ENCODE measurements at regions of chr16 and their contacts with region 1.

Region 1: DNA sequence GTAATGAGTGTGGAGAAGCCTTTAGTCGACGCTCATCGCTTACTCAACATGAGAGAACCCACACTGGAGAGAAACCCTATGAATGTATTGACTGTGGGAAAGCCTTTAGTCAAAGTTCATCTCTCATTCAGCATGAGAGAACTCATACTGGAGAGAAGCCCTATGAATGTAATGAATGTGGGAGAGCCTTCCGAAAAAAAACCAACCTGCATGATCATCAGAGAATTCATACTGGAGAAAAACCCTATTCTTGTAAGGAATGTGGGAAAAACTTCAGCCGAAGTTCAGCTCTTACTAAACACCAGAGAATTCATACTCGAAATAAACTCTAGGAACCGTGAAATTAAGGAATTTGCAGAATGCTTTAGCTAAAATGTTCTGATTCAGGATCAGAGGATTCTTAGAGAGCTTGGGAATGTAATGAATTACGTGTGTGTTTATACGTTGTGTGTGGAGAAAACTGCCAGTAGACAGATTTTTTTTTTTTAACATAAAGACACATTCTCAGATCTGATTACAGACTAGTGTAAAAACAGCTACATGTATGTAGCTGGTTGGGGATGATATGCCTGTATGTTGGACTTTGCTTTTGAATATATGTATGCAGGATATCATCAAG is 25.4 kb downstream of the ZFP90 start:
- DNase-seq: no peak
- H3K4me3 ChIP-seq: no peak overlapping the region
- H3K27ac ChIP-seq: no peak overlapping the region
- H3K4me1 ChIP-seq: no peaks in the 10 kb centered on the region
- H3K27me3 ChIP-seq: no peaks in the 10 kb centered on the region
- CTCF ChIP-seq: no peak
- EP300 ChIP-seq: no peak
- POLR2A ChIP-seq: no peak

Region 2: DNA sequence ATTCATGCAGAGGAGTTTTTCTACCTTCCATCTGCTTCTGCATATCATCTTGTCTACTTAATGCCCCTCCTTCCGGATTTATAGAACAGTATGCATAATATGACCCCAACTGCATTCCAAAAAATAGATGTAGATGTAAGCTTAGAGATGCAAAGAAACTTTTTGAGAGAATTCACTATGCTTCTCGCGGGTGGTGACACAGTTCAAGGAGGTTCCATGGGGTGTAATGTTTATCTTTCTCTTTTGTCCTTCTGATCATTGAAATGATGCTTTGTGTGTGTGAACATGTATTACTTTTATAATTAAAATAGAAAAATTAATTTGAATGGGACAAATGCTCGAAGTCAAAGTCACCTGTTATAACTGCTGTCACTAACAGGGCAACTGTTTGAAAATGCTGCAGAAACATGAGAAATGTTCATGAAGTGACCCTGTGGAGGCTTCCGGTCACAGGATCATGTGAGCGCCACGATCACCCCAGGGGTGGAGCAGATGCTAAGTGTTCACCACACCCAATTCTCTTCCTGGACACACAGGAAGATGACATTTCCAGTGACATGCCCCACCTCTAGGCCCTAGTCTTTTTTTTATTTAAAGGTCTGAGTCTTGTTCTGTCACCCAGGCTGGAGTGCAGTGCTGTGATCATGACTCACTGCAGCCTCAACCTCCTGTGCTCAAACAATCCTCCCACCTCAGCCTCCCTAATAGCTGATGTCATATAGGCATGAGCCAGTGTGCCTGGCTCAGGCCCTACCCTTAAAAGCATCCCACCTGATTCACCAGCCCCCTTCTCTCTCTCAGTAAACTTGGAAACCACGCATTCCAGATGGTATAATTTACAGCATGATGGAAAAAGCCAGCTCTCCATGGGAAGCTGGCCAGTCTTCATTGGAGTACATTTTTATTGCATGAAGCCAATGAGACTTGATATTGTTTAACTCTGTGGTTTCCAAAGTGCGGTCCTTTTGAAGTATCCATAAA is 1060.1 kb before region 1 on chr16:
- in situ Hi-C with region 1: no loop called
- intact Hi-C with region 1: loop called (anchors 5 kb)
- DNase-seq: peak; percentile 68
- H3K4me3 ChIP-seq: no peak overlapping the region
- H3K27ac ChIP-seq: peak overlapping the region; percentile 13 to 67 (median 54)
- H3K4me1 ChIP-seq: peaks cover 0 to 16% (median 8%) of the 10 kb centered on the region in 4 donors
- H3K27me3 ChIP-seq: no peaks in the 10 kb centered on the region
- CTCF ChIP-seq: no peak
- EP300 ChIP-seq: peak; percentile 28
- POLR2A ChIP-seq: no peak

Region 3: DNA sequence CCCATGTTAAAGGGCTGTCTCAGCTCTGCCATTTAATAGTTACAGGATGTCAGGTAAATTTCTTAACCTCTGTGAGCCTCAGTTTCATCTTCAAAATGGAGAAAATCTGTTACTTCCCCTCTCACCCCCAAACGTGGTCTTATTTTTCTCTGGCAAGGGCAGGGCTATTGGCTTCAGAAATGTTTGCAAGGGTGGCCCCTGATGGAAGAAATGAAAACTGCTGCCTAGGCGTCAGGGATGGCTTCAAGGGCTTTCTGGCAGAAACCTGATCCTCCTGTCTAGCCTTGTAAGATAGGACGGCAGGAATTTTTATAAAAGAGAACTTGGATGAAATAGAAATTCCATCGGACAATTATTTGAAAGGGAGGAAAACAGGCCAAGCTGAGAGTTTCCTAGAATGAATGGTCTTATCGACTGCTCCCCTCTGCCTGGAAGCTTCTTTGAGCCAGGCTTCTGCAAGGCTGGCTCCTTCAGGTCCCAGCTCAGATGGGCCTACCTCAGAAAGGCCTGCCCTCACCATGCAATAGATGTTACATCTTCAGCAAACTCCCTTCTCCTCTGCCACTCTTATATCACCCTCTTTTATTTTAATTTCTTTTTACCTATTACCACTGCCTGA is 235.9 kb after region 1 on chr16:
- in situ Hi-C with region 1: loop called in 1 of 4 experiments (anchors 25 kb)
- intact Hi-C with region 1: no loop called
- DNase-seq: peak; percentile 65
- H3K4me3 ChIP-seq: no peak overlapping the region
- H3K27ac ChIP-seq: no peak overlapping the region
- H3K4me1 ChIP-seq: peaks cover 0 to 11% (median 0%) of the 10 kb centered on the region in 4 donors
- H3K27me3 ChIP-seq: no peaks in the 10 kb centered on the region
- CTCF ChIP-seq: peak; percentile 64 to 79 (median 65)
- EP300 ChIP-seq: no peak
- POLR2A ChIP-seq: no peak

Region 4: DNA sequence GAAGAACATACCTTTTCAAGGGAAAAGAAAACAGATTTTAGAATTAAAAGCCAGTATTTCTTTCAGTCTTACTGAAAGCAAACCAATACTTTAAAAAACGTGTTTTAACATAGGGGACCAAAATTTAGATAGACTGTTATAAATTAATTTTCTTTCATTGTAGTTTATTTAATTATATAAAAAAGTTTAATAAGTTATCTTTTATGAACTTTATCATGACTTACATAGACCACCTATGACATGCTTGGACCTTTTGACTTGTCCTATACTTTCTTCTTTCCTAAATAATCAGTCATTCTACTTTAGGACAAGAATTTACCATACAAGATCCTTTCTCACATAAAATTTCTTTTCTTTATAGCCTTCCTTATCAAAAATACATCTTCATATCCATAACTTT is 439.0 kb after region 1 on chr16:
- in situ Hi-C with region 1: no loop called
- intact Hi-C with region 1: no loop called
- DNase-seq: no peak
- H3K4me3 ChIP-seq: no peak overlapping the region
- H3K27ac ChIP-seq: no peak overlapping the region
- H3K4me1 ChIP-seq: no peaks in the 10 kb centered on the region
- H3K27me3 ChIP-seq: no peaks in the 10 kb centered on the region
- CTCF ChIP-seq: no peak
- EP300 ChIP-seq: no peak
- POLR2A ChIP-seq: no peak

Measured in transverse colon (tissue), 4 donors.